Panc1 (cell line): ENCODE measurements at regions of chr22 and their contacts with region 1.

Region 1: GRCh38 chr22:17501679-17502285 is 61.5 kb upstream of the SLC25A18 start:
- DNase-seq: peak; percentile 53
- ATAC-seq: peak; percentile 92
- H3K4me3 ChIP-seq: no peak overlapping the region
- H3K27ac ChIP-seq: no peak overlapping the region
- H3K4me1 ChIP-seq: no peaks in the 10 kb centered on the region
- H3K27me3 ChIP-seq: no peaks in the 10 kb centered on the region
- CTCF ChIP-seq: peak; percentile 66; the same call in 1 of the 2 replicates

Region 2: GRCh38 chr22:17077255-17077654 is 424.5 kb before region 1 on chr22:
- CTCF ChIA-PET with region 1: interaction called, 3 read pairs
- POLR2A ChIA-PET with region 1: no interaction called
- in situ Hi-C with region 1: no loop called
- intact Hi-C with region 1: loop called (anchors 10 kb)
- DNase-seq: no peak
- ATAC-seq: no peak
- H3K4me3 ChIP-seq: no peak overlapping the region
- H3K27ac ChIP-seq: no peak overlapping the region
- H3K4me1 ChIP-seq: no peaks in the 10 kb centered on the region
- H3K27me3 ChIP-seq: no peaks in the 10 kb centered on the region
- CTCF ChIP-seq: no peak

Region 3: GRCh38 chr22:17171313-17172171 is 330.2 kb before region 1 on chr22:
- CTCF ChIA-PET with region 1: interaction called, 30 read pairs
- POLR2A ChIA-PET with region 1: interaction called, 4 read pairs
- in situ Hi-C with region 1: no loop called
- intact Hi-C with region 1: loop called (anchors 5 kb)
- DNase-seq: peak; percentile 47
- ATAC-seq: peak; percentile 99
- H3K4me3 ChIP-seq: peak overlapping the region; percentile 55 to 60
- H3K27ac ChIP-seq: peak overlapping the region; percentile 74
- H3K4me1 ChIP-seq: peaks cover 4% of the 10 kb centered on the region; the same call in 1 of the 2 replicates
- H3K27me3 ChIP-seq: no peaks in the 10 kb centered on the region
- CTCF ChIP-seq: peak; percentile 96

Region 4: GRCh38 chr22:17349154-17349553 is 152.6 kb before region 1 on chr22:
- CTCF ChIA-PET with region 1: interaction called, 11 read pairs
- POLR2A ChIA-PET with region 1: interaction called, 3 read pairs
- in situ Hi-C with region 1: no loop called
- intact Hi-C with region 1: no loop called
- DNase-seq: no peak
- ATAC-seq: no peak
- H3K4me3 ChIP-seq: peak overlapping the region; percentile 4 to 11; a peak in 3 of 4 replicates
- H3K27ac ChIP-seq: no peak overlapping the region
- H3K4me1 ChIP-seq: peaks cover 3% of the 10 kb centered on the region; the same call in 1 of the 2 replicates
- H3K27me3 ChIP-seq: no peaks in the 10 kb centered on the region
- CTCF ChIP-seq: no peak

Region 5: GRCh38 chr22:17368554-17369438 is 133.0 kb before region 1 on chr22:
- CTCF ChIA-PET with region 1: no interaction called
- POLR2A ChIA-PET with region 1: no interaction called
- in situ Hi-C with region 1: no loop called
- intact Hi-C with region 1: loop called (anchors 5 kb)
- DNase-seq: no peak
- ATAC-seq: peak; percentile 73
- H3K4me3 ChIP-seq: peak overlapping the region; percentile 50 to 59
- H3K27ac ChIP-seq: peak overlapping the region; percentile 29; the same call in 1 of the 2 replicates
- H3K4me1 ChIP-seq: no peaks in the 10 kb centered on the region; the same call in 1 of the 2 replicates
- H3K27me3 ChIP-seq: no peaks in the 10 kb centered on the region
- CTCF ChIP-seq: no peak

Region 6: GRCh38 chr22:17483688-17484381 is 17.9 kb before region 1 on chr22:
- CTCF ChIA-PET with region 1: no interaction called
- POLR2A ChIA-PET with region 1: no interaction called
- in situ Hi-C with region 1: no loop called
- intact Hi-C with region 1: no loop called
- DNase-seq: no peak
- ATAC-seq: no peak
- H3K4me3 ChIP-seq: no peak overlapping the region
- H3K27ac ChIP-seq: no peak overlapping the region
- H3K4me1 ChIP-seq: no peaks in the 10 kb centered on the region
- H3K27me3 ChIP-seq: no peaks in the 10 kb centered on the region
- CTCF ChIP-seq: no peak

Region 7: DNA sequence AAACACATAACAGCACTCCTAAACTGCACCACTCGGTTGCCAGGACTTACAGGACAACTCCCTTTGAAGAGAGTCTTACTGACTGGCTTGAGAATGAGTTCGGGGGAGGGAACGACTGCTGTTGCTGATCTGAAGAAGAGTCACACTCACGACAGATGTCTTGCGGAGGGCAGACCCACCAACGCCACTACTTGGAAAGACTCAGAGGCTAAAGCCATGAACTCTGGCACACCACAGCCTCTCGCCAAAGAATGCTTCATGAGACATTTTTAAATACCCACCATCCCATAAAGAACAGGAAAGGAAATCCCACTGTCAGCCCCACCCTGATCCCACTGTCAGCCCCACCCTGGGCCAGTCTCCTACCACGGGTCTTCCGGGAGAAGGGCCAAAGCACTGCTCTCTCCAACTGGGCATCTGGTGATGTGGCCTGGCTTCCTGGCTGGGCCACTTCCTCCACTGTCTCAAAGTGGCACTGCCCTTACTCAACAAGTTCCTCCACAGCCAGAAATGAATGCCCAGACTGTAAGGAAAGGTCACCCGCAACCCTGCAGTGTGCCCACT is 449.0 kb after region 1 on chr22:
- CTCF ChIA-PET with region 1: no interaction called
- POLR2A ChIA-PET with region 1: no interaction called
- in situ Hi-C with region 1: no loop called
- intact Hi-C with region 1: no loop called
- DNase-seq: no peak
- ATAC-seq: no peak
- H3K4me3 ChIP-seq: no peak overlapping the region
- H3K27ac ChIP-seq: no peak overlapping the region
- H3K4me1 ChIP-seq: peaks cover 4% of the 10 kb centered on the region; the same call in 1 of the 2 replicates
- H3K27me3 ChIP-seq: no peaks in the 10 kb centered on the region
- CTCF ChIP-seq: no peak